Gastrocnemius medialis (tissue), 4 donors: ENCODE measurements at regions of chrX and their contacts with region 1.

Region 1: DNA sequence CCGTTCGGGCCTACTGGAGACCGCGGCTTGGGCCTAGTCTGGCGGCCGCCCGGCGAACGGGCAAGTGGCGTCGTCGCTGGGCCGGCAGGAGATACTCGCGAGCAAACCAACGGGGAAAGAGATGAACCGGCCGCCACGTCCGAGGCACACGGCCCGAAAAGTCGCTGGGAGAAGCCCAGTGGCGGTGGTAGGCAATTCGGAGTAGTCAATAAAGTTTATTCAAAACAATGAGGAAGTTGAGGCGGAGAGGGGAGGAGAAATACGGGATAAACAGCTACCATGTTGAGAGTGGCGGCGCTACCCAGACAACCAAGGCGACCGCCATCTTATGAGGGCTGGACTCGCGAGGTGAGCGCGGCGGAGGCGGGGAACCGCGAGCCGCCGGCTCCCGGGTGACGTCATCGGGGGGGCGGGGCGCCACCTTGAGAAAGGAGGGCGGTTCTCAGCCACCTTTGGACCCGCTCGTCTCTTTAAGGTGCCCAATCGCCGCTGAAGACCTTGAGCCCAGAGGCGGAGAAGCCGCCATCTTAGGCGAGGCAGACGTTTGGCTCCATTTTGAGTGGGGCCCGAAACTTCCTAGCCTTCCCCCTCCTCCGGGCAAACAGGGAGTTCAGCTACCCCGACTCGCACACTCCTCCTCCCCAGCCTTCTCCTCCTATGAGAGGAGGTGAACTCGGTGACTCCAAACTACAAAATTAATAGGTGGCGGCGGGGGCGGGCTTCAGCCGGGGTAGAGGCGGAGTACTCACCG is at the start of gene PHF8:
- DNase-seq: peak; percentile 87 to 95
- ATAC-seq: peak; percentile 91 to 95
- H3K4me3 ChIP-seq: peak within 1 kb of the TSS; percentile 70 to 96 (median 78)
- H3K27ac ChIP-seq: peak within 1 kb of the TSS; percentile 90 to 96 (median 94)
- H3K4me1 ChIP-seq: no peaks in the 10 kb centered on the region
- H3K27me3 ChIP-seq: no peaks in the 10 kb centered on the region
- CTCF ChIP-seq: no peak
- POLR2A ChIP-seq: peak; percentile 60 to 67
- total RNA-seq, gene PHF8: 7.2 to 22.5 (median 13.9) TPM

Region 2: GRCh38 chrX:53683556-53684414 is 360.5 kb before region 1 on chrX:
- in situ Hi-C with region 1: no loop called
- intact Hi-C with region 1: loop called (anchors 1 kb)
- DNase-seq: peak; percentile 91 to 95
- ATAC-seq: peak; percentile 84 to 86
- H3K4me3 ChIP-seq: peak overlapping the region; percentile 58 to 86 (median 60)
- H3K27ac ChIP-seq: peak overlapping the region; percentile 83 to 95 (median 90)
- H3K4me1 ChIP-seq: peaks cover 2 to 26% of the 10 kb centered on the region in 2 donors
- H3K27me3 ChIP-seq: no peaks in the 10 kb centered on the region
- CTCF ChIP-seq: no peak
- POLR2A ChIP-seq: peak; percentile 74 to 79

Region 3: GRCh38 chrX:54007682-54008081 is 36.6 kb before region 1 on chrX:
- in situ Hi-C with region 1: no loop called
- intact Hi-C with region 1: no loop called
- DNase-seq: no peak
- ATAC-seq: no peak
- H3K4me3 ChIP-seq: no peak overlapping the region
- H3K27ac ChIP-seq: no peak overlapping the region
- H3K4me1 ChIP-seq: no peaks in the 10 kb centered on the region
- H3K27me3 ChIP-seq: no peaks in the 10 kb centered on the region
- CTCF ChIP-seq: no peak
- POLR2A ChIP-seq: no peak

Region 4: GRCh38 chrX:54439967-54440871 is 395.9 kb after region 1 on chrX and contains the start of gene TSR2:
- in situ Hi-C with region 1: no loop called
- intact Hi-C with region 1: loop called (anchors 1 kb)
- DNase-seq: peak; percentile 63 to 76
- ATAC-seq: peak; percentile 96 to 97
- H3K4me3 ChIP-seq: peak within 1 kb of the TSS; percentile 74 to 95 (median 90)
- H3K27ac ChIP-seq: peak within 1 kb of the TSS; percentile 61 to 77 (median 63)
- H3K4me1 ChIP-seq: peaks cover 6 to 14% of the 10 kb centered on the region in 2 donors
- H3K27me3 ChIP-seq: no peaks in the 10 kb centered on the region
- CTCF ChIP-seq: no peak
- POLR2A ChIP-seq: peak in 1 of 2 donors; percentile 49
- total RNA-seq, gene TSR2: 10.1 to 24.2 (median 18.0) TPM

Region 5: DNA sequence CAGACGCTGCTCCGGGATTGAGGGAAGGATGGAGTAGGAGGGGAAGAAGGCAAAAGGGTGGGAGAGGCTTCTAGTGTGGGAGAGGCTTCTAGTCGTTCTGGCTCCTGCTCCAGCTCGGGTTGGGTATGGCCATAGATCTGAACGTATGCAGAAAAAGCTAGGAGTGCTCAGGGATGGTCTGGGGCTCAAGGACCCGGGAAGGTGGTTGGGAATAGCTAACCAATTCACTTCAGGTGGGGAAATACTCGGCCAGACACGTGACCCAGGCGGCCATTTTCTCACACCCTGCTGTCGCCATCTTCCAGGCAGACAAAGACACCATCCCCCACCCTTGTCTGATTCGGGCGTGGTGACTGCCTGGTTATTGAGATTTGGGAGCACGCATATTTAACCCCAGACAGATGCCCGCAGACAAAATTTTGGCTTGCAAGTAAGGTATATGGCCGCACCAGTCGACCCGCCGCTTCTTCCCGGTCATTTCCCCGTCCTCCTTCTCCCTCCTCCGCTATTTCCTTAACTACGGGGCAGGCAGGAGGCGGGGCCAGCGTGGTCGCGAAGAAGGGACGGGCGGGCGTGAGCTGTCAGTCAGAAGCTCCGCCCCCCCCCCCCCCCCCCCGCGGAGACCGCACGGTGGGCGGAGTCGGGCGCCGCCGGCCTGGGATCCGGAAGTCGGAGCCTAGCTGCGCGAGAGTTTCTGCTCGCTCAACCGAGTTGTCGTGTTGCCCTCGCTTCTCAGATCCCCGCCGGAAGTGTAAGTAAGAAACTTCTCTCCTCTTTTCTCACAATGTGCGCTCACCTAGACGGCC is 485.5 kb after region 1 on chrX and contains the start of gene GNL3L:
- in situ Hi-C with region 1: loop called in 2 of 4 experiments (anchors 25 kb)
- intact Hi-C with region 1: no loop called
- DNase-seq: peak; percentile 78 to 87
- ATAC-seq: peak; percentile 91 to 92
- H3K4me3 ChIP-seq: peak within 1 kb of the TSS; percentile 64 to 84 (median 76)
- H3K27ac ChIP-seq: peak within 1 kb of the TSS; percentile 80 to 91 (median 84)
- H3K4me1 ChIP-seq: peaks cover 4 to 12% of the 10 kb centered on the region in 2 donors
- H3K27me3 ChIP-seq: no peaks in the 10 kb centered on the region
- CTCF ChIP-seq: no peak
- POLR2A ChIP-seq: peak; percentile 38 to 50
- total RNA-seq, gene GNL3L: 21.2 to 41.7 (median 34.9) TPM

Region 6: GRCh38 chrX:55008471-55009358 is 964.4 kb after region 1 on chrX:
- in situ Hi-C with region 1: no loop called
- intact Hi-C with region 1: no loop called
- DNase-seq: peak; percentile 24 to 65
- ATAC-seq: peak; percentile 87 to 89
- H3K4me3 ChIP-seq: no peak overlapping the region
- H3K27ac ChIP-seq: peak overlapping the region; percentile 69 to 75 (median 72)
- H3K4me1 ChIP-seq: peaks cover 0 to 5% of the 10 kb centered on the region in 2 donors
- H3K27me3 ChIP-seq: no peaks in the 10 kb centered on the region
- CTCF ChIP-seq: no peak
- POLR2A ChIP-seq: no peak

Region 7: GRCh38 chrX:55160685-55161552 is 1116.6 kb after region 1 on chrX:
- in situ Hi-C with region 1: no loop called
- intact Hi-C with region 1: loop called (anchors 5 kb)
- DNase-seq: peak; percentile 81 to 87
- ATAC-seq: peak; percentile 96
- H3K4me3 ChIP-seq: peak overlapping the region; percentile 64 to 73 (median 68)
- H3K27ac ChIP-seq: peak overlapping the region; percentile 90 to 91 (median 91)
- H3K4me1 ChIP-seq: peaks cover 0 to 5% of the 10 kb centered on the region in 2 donors
- H3K27me3 ChIP-seq: no peaks in the 10 kb centered on the region
- CTCF ChIP-seq: peak; percentile 12 to 52 (median 41)
- POLR2A ChIP-seq: peak; percentile 76 to 83